Aorta (tissue), 5 donors: ENCODE measurements at regions of chr4 and their contacts with region 1.

Region 1: GRCh38 chr4:110049951-110050925 is 137.6 kb downstream of the EGF start:
- DNase-seq: no peak
- ATAC-seq: no peak
- H3K4me3 ChIP-seq: no peak overlapping the region
- H3K27ac ChIP-seq: no peak overlapping the region
- H3K4me1 ChIP-seq: no peaks in the 10 kb centered on the region
- H3K27me3 ChIP-seq: no peaks in the 10 kb centered on the region

Region 2: DNA sequence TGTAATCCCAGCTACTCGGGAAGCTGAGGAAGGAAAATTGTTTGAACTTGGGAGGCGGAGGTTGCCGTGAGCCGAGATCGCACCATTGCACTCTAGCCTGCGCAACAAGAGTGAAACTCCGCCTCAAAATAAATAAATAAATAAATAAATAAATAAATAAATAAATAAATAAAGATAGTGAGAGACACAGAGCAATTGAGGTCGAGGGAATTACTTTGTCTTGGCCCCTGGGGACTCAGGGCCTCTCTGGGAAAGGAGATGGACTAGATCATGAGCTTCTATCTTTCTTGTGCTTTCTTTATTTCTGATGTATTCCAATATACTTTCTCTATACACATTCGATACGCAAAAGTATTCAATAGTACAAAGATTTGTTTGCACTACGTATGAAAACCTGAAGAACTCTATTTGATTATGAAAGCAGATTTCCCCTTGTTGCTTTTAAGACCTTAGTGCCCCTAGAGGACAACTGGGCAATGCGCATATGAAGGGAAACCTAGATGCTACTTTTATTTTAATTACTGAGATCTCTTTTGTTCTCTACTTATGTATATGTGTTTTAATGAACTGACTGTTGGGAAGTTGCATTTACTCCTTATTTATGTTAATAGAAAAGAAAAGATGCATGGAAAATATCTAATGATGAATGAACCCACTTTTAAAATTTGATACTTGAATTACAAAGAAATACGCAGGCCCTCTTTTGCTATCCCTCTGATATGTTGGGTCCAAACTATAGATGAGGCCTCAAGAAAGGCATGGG is 160.9 kb after region 1 on chr4:
- intact Hi-C with region 1: loop called (anchors 1 to 2 kb)
- DNase-seq: no peak
- ATAC-seq: no peak
- H3K4me3 ChIP-seq: no peak overlapping the region
- H3K27ac ChIP-seq: no peak overlapping the region
- H3K4me1 ChIP-seq: no peaks in the 10 kb centered on the region
- H3K27me3 ChIP-seq: no peaks in the 10 kb centered on the region